BJ (cell line): ENCODE measurements at regions of chr11 and their contacts with region 1.

Region 1: DNA sequence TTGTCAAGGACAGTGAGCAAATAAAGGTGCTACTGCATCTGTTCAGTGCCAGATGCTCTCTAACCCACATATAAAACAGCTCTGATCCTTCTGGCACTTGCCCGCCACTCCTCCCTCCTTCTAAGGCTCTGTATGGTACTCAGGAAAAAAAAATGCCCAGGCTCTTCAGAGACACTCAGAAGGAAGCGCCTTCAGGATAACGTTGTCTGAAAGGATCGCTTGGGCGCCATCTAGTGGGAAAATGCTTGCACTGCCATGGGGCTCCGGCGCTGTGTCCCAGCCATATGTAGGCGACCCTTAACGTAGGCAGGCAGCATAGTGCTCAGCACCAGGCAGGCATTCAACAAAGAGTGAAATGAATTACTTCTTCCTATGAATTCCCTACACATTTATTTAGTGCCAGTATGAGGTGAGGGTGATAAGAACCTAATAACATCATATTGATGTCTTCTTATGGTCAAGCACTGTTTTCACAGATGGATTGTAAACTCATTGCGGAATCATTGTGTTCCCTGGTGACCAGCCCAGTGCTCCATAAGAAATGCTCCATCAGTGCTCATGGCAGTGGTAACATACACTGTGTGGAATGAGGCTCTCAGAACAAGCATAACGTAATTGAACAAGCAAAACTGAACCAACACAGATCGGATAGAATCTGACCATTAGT is 39.6 kb downstream of the PAMR1 start:
- DNase-seq: no peak
- H3K4me3 ChIP-seq: no peak overlapping the region
- H3K27me3 ChIP-seq: no peaks in the 10 kb centered on the region
- CTCF ChIP-seq: peak; percentile 87

Region 2: GRCh38 chr11:34926101-34926830 is 559.5 kb before region 1 on chr11:
- CTCF ChIA-PET with region 1: interaction called, 11 read pairs
- POLR2A ChIA-PET with region 1: no interaction called
- DNase-seq: no peak
- H3K4me3 ChIP-seq: no peak overlapping the region
- H3K27me3 ChIP-seq: no peaks in the 10 kb centered on the region
- CTCF ChIP-seq: peak; percentile 64

Region 3: GRCh38 chr11:35260342-35260985 is 225.3 kb before region 1 on chr11:
- CTCF ChIA-PET with region 1: no interaction called
- POLR2A ChIA-PET with region 1: no interaction called
- DNase-seq: peak; percentile 83
- H3K4me3 ChIP-seq: no peak overlapping the region
- H3K27me3 ChIP-seq: no peaks in the 10 kb centered on the region
- CTCF ChIP-seq: no peak

Region 4: GRCh38 chr11:35343033-35343598 is 142.7 kb before region 1 on chr11:
- CTCF ChIA-PET with region 1: no interaction called
- POLR2A ChIA-PET with region 1: no interaction called
- DNase-seq: no peak
- H3K4me3 ChIP-seq: no peak overlapping the region
- H3K27me3 ChIP-seq: no peaks in the 10 kb centered on the region
- CTCF ChIP-seq: no peak

Region 5: GRCh38 chr11:35461917-35462538 is 23.8 kb before region 1 on chr11:
- CTCF ChIA-PET with region 1: no interaction called
- POLR2A ChIA-PET with region 1: no interaction called
- DNase-seq: no peak
- H3K4me3 ChIP-seq: no peak overlapping the region
- H3K27me3 ChIP-seq: no peaks in the 10 kb centered on the region
- CTCF ChIP-seq: no peak

Region 6: GRCh38 chr11:35474688-35475087 is 11.1 kb before region 1 on chr11:
- CTCF ChIA-PET with region 1: interaction called, 11 read pairs
- POLR2A ChIA-PET with region 1: no interaction called
- DNase-seq: no peak
- H3K4me3 ChIP-seq: no peak overlapping the region
- H3K27me3 ChIP-seq: no peaks in the 10 kb centered on the region
- CTCF ChIP-seq: no peak

Region 7: GRCh38 chr11:35525501-35526175 is 39.8 kb after region 1 on chr11 and contains the start of gene PAMR1:
- CTCF ChIA-PET with region 1: interaction called, 11 read pairs
- POLR2A ChIA-PET with region 1: no interaction called
- DNase-seq: no peak
- H3K4me3 ChIP-seq: peak within 1 kb of the TSS; percentile 81
- H3K27me3 ChIP-seq: no peaks in the 10 kb centered on the region
- CTCF ChIP-seq: no peak
- polyA plus RNA-seq, gene PAMR1: 112 and 131 TPM in 2 replicates

Region 8: DNA sequence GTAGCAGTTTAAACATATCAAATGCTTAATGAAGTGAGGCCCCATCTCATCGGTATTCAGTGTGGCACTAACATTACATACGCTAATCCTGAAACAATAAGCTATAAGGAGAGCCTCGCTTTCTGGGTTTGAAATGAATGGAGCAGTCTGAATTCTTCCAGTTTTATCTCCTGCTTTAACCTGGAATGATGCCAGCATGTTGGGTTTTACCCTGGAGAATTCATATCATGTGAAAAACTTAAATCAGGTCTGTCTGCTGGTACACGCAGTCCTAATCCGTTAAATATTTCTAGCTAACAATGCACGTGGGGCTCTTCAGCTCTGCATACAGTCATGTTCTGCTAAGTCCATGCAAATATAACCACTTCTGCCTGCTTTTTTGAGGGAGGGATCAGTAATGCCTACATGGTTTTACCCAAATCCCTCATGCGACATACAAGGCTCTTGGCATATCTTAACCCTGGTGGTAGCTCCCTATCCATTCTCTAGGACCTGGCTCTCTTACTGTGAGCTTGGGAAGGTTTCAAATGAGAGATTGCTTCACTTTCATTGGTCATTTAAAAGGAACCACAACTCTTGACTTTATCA is 710.7 kb after region 1 on chr11:
- CTCF ChIA-PET with region 1: no interaction called
- POLR2A ChIA-PET with region 1: no interaction called
- DNase-seq: no peak
- H3K4me3 ChIP-seq: no peak overlapping the region
- H3K27me3 ChIP-seq: no peaks in the 10 kb centered on the region
- CTCF ChIP-seq: no peak